ENCODE measurements at regions of chr17 and their contacts with region 1.

Region 1: GRCh38 chr17:1573916-1574696 is 11.5 kb upstream of the PITPNA start:
- DNase-seq: peak; percentile 93
- CTCF ChIP-seq: peak; percentile 84

Region 2: DNA sequence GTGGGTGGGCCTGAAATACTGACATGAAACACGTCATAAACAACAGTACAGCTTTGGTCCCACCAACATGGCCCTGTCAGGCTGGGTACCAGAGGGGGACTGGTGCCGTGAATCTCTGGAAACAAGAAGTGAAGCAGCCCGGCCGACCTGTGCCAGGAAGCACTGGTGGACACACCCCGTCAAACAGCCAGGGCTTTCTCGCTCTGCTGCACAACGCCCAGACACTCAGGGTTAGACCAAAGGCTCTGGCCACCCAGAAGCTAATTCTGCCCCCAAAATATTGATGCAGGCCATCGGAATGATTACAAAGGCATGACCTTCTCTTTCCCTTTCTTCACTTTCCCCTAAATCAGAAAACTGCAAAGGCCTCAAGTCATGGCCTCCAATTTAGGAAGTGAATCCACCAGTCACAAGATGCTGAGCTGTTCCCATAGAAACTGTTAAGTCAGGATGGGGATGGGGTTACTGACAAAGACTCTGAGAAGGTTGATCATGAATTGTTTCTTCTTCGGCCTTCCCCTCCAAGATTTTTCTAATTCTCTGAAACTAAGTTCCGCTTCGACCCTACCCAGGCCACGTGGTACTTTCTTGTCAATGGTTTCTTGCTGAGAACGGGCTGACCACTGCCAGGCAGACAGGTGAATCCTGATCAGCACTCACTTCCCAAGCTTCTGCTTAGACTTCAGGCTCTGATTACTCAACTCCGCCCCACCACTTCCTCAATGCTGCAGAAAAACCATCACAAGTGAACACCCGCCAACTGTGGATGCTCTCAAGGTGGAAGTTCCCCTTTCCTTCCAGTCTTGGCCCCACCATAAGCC is 18.2 kb before region 1 on chr17:
- CTCF ChIA-PET with region 1: interaction called, 11 read pairs
- POLR2A ChIA-PET with region 1: interaction called, 8 read pairs
- DNase-seq: peak; percentile 52
- CTCF ChIP-seq: no peak

Region 3: DNA sequence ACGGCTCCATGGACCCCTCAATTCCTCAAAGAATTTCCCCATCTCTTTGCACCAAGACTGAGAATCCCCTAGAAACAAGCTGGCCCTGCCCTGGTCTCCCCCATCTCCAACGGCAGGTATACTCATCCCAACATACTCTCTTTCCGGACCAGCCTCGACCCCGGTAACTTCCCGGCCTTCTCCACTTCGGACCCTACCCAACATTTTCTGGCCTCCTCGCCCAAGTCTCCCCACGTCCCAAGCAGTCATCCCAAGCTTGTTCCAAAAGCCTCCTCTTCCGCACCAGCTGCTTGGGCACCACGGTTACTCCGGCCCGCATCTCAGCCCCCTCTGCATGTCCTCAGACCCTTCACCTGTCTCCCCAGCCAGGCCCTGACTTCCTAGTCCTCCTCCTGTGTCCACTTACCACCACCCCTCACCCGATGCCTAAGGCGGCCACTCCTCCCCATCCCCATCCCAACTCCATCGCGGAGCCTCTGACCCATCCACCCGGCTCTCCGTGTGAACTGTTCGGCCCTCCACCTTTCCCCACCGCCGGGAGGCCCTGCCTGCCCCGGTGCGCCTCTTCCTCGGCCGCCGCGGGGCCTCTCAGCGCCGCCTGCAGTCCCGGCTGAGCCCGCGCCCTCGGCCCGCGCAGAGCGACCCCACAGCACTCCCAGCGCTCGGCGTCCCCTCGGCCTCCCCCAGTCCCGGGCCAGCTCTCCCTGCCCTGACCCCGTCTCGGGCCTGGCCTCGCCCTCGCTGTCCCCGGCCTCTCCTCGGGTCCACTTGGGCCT is 12.5 kb before region 1 on chr17:
- CTCF ChIA-PET with region 1: interaction called, 18 read pairs
- POLR2A ChIA-PET with region 1: no interaction called
- DNase-seq: peak; percentile 62
- CTCF ChIP-seq: peak; percentile 41

Region 4: DNA sequence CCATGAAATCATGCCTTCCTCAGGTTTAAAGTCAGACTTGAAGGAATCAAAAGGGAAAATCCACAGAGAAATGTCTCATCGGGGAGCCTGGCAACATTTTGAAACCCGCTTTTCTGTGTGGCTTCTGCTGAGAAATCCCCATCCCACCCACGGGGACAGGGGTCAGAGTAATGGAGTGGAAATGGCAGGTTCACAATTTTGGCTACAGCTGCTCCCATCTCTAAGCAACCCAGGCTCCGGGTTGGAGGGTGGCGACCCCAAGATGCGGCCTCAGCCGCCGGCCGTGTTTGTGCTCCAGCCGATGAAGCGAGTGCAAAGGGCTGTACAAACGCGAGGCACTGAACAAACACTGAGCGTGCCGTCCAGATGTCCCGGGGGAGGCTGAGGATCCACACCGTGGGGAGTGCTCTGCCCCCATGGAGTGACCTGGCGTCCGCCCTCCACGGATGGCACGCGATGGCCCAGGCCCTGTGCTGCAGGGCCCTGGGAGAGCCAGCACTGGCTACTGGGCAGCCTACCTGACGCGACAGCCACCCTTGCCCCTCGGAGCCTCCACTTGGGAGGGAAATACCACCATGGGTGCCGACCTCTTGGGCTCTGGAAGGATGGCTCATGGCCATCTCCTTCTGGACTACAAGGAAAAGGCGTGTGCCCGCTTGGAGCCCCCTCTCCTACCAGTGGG is 32.4 kb after region 1 on chr17:
- CTCF ChIA-PET with region 1: interaction called, 34 read pairs
- POLR2A ChIA-PET with region 1: interaction called, 3 read pairs
- DNase-seq: peak; percentile 30
- CTCF ChIP-seq: no peak

Region 5: DNA sequence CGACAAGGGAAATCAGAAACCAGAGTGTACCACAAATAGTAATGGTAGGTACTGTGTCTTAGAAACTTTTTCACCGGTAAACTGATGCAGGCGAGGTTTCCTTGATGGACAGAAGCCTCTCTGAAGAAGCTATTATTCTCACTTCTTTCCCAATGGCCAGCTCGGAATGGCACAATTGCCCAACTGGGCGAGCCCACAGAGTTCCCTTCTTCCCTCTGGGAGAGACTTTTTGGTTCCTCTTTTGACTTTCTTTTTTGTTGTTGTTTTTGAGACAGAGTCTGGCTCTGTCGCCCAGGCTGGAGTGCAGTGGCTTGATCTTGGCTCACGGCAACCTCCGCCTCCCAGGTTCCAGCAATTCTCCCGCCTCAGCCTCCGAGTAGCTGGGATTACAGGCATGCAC is 37.6 kb after region 1 on chr17:
- CTCF ChIA-PET with region 1: interaction called, 34 read pairs
- POLR2A ChIA-PET with region 1: interaction called, 3 read pairs
- DNase-seq: no peak
- CTCF ChIP-seq: no peak

Region 6: DNA sequence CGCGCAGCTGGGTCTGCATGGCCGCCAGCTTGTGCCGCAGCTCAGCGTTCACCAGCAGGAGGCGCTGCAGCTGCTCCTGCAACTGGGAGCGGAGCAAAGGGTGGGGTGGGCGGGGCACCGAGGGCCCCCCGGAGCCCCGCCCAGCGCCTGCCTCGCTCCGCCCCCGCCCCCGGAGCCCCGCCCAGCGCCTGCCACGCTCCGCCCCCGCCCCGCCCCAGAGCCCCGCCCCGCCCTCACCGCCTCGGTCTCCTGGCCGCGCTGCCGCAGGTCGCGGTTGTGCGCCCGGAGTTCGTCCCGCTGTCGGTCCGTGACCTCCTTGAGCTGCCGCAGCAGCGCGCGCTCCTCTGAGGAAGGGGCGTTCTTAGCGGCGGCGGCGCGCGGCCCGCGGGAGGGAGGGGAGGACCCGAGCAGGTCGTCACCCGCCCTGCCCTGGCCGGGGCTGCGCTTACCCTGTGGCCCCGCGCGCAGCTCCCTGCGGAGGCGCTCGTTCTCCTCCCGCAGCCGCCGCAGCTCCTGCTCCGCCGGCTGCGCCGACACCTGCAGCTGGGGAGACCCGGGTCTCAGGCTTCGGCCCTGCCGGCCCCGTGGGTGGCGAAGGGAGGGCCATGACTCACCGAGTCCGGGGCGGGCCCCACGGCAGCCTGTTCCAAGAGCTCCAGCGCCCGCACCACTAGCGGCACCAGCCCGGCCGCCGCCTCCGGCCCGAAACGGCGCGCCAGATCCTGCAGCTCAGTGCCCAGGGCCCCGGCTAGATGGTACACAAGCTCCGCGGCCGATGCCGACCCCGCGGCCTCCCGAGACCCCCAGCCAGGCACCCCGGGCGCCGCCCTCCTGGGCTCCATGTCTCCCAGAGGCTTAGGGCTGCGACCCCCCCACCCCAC is 75.1 kb after region 1 on chr17:
- CTCF ChIA-PET with region 1: interaction called, 52 read pairs
- POLR2A ChIA-PET with region 1: interaction called, 4 read pairs
- DNase-seq: peak; percentile 98
- CTCF ChIP-seq: peak; percentile 100